A673 (cell line): ENCODE measurements at regions of chr1 and their contacts with region 1.

Region 1: DNA sequence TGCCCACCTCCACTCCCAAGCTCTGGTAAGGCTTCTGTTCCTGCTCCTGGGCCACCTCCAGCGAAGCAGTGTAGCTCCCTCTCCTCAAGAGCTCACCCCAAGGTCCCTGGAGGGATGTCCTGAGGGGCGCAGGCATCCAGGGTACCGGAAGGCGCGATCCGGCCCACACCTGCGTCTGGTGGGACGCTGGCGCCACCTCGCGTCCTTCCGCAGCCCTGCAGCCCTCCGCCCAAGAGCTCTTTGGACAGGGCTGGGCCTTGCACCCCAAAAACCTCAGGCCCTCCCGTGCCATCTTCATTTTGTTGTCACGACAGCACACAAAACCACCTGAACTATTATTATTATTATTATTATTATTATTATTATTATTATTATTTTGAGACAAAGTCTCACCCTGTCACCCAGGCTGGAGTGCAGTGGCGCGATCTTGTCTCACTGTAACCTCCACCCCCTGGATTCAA is 49.2 kb upstream of the PAX7 start:
- DNase-seq: peak; percentile 39
- H3K4me3 ChIP-seq: no peak overlapping the region
- H3K27ac ChIP-seq: no peak overlapping the region
- H3K4me1 ChIP-seq: no peaks in the 10 kb centered on the region
- H3K27me3 ChIP-seq: no peaks in the 10 kb centered on the region
- CTCF ChIP-seq: peak; percentile 74

Region 2: DNA sequence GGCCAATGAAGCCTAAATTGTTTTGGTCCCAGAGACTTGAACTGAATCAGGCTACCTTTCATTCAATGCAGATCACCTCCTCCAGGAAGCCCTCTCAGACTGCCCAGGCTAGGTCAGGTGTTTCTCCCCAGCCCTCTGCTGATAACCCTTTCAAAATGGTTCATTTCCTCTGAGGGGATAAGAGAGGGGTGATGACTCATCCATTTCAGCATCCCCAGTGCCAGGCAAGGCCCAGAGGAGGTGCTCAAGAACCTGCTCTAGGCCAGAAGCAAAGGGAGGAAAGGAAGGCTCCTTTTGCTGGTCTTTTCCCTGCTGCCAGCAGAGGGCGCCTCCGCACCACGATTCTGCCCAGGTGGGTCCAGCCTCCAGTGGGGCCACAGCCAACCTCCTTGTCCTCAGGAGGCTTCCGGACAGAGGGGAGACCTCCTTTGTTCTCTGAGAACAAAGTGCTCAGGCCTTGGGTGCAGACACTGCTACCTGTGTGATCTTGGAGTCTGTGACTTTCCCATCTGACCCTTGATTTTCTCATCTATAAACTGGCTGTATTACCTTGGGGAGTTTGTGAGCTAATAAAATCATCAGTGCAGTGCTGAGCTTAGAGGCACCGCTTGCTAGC is 1087.2 kb before region 1 on chr1:
- CTCF ChIA-PET with region 1: no interaction called
- POLR2A ChIA-PET with region 1: no interaction called
- intact Hi-C with region 1: loop called (anchors 10 kb)
- DNase-seq: peak; percentile 84
- H3K4me3 ChIP-seq: no peak overlapping the region
- H3K27ac ChIP-seq: no peak overlapping the region
- H3K4me1 ChIP-seq: no peaks in the 10 kb centered on the region
- H3K27me3 ChIP-seq: no peaks in the 10 kb centered on the region
- CTCF ChIP-seq: peak; percentile 96

Region 3: GRCh38 chr1:17653728-17654351 is 927.6 kb before region 1 on chr1:
- CTCF ChIA-PET with region 1: no interaction called
- POLR2A ChIA-PET with region 1: no interaction called
- intact Hi-C with region 1: loop called (anchors 5 kb)
- DNase-seq: peak; percentile 45
- H3K4me3 ChIP-seq: no peak overlapping the region
- H3K27ac ChIP-seq: no peak overlapping the region
- H3K4me1 ChIP-seq: no peaks in the 10 kb centered on the region
- H3K27me3 ChIP-seq: no peaks in the 10 kb centered on the region
- CTCF ChIP-seq: peak; percentile 88